Activated CD8-positive, alpha-beta T cell treated with anti-CD3 and anti-CD28 coated beads, Interleukin-2, amount 10 ng/mL, durations not matched to agents 7 days and 5 days (primary cell): ENCODE measurements at regions of chr19 and their contacts with region 1.

Region 1: GRCh38 chr19:19488875-19489690 is 26.3 kb downstream of the TSSK6 start:
- DNase-seq: peak; percentile 98
- ATAC-seq: peak; percentile 91
- H3K4me3 Mint-ChIP-seq: peak overlapping the region; percentile 68
- H3K27ac Mint-ChIP-seq: peak overlapping the region; percentile 97
- H3K4me1 Mint-ChIP-seq: peaks cover 62% of the 10 kb centered on the region
- H3K27me3 Mint-ChIP-seq: no peaks in the 10 kb centered on the region

Region 2: GRCh38 chr19:19320362-19321142 is 168.5 kb before region 1 on chr19 and contains the starts of genes MAU2 and SUGP1:
- CTCF ChIA-PET with region 1: interaction called, 12 read pairs
- POLR2A ChIA-PET with region 1: interaction called, 3 read pairs
- DNase-seq: peak; percentile 95
- ATAC-seq: peak; percentile 94
- H3K4me3 Mint-ChIP-seq: peak within 1 kb of the TSS; percentile 97
- H3K27ac Mint-ChIP-seq: peak within 1 kb of the TSS; percentile 100
- H3K4me1 Mint-ChIP-seq: peaks cover 37% of the 10 kb centered on the region
- H3K27me3 Mint-ChIP-seq: no peaks in the 10 kb centered on the region
- total RNA-seq, gene MAU2: 67.0 to 67.4 TPM
- total RNA-seq, gene SUGP1: 58.9 to 60.9 TPM

Region 3: GRCh38 chr19:19372656-19373416 is 116.2 kb before region 1 on chr19:
- CTCF ChIA-PET with region 1: interaction called, 162 read pairs
- POLR2A ChIA-PET with region 1: interaction called, 3 read pairs
- DNase-seq: peak; percentile 66
- ATAC-seq: peak; percentile 94
- H3K4me3 Mint-ChIP-seq: peak overlapping the region; percentile 59
- H3K27ac Mint-ChIP-seq: peak overlapping the region; percentile 94
- H3K4me1 Mint-ChIP-seq: peaks cover 15% of the 10 kb centered on the region
- H3K27me3 Mint-ChIP-seq: no peaks in the 10 kb centered on the region

Region 4: DNA sequence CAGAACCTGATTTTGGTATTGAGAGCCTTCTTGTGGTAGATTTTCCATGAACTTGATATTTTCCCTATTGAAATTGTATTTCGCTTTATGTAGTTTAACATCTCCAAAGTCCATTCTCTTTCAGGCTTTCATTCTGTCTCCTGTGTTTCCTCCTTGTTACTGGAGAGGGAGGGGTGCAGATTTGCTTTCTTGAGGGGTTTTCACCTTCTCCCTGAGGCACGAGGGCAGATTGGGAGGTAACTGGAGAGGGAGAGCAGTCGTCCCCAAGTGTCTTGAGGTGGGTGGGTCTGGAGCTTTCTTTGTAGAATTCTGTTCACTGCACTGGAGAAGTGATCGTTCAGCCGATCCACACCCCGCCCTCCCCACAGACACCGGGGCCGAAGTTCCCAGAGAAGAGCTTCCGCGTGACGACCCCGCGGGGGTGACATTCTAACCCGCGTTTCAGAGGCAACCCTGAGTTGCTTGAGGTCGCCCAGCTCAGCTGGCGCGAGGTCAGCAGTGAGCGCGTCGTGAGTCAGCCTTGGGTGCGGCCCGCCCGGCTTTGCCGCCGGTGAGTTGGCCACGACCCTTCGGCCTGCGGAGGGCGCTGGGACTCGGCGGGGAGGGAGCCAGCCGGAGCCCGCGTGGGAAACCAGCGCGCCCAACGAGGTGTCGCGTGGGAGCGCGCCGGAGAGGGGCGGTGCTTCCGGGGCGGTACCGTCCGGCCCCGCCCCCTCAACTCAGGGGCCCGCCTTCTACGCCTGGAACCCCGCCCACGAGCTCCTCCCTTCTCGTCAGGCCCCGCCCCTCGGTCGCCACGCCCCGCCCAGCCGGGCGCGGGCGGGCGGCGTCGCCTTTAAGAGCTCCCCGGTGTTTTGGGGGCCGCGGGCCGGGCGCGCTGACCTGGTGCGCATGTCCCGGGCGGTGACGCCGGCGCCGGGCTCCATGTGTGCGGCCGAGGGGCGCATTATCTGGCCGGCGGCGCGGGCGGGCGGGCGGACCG is 83.9 kb before region 1 on chr19 and contains the start of gene GATAD2A:
- CTCF ChIA-PET with region 1: interaction called, 40 read pairs
- POLR2A ChIA-PET with region 1: interaction called, 4 read pairs
- DNase-seq: peak; percentile 92
- ATAC-seq: peak; percentile 80
- H3K4me3 Mint-ChIP-seq: peak within 1 kb of the TSS; percentile 98
- H3K27ac Mint-ChIP-seq: peak within 1 kb of the TSS; percentile 93
- H3K4me1 Mint-ChIP-seq: peaks cover 61% of the 10 kb centered on the region
- H3K27me3 Mint-ChIP-seq: no peaks in the 10 kb centered on the region
- total RNA-seq, gene GATAD2A: 180 TPM

Region 5: GRCh38 chr19:19451429-19452242 is 37.4 kb before region 1 on chr19:
- CTCF ChIA-PET with region 1: interaction called, 18 read pairs
- POLR2A ChIA-PET with region 1: interaction called, 4 read pairs
- DNase-seq: peak; percentile 60
- ATAC-seq: peak; percentile 72
- H3K4me3 Mint-ChIP-seq: peak overlapping the region; percentile 1
- H3K27ac Mint-ChIP-seq: peak overlapping the region; percentile 74
- H3K4me1 Mint-ChIP-seq: peaks cover 78% of the 10 kb centered on the region
- H3K27me3 Mint-ChIP-seq: no peaks in the 10 kb centered on the region

Region 6: GRCh38 chr19:19475849-19476828 is 12.9 kb before region 1 on chr19:
- CTCF ChIA-PET with region 1: interaction called, 13 read pairs
- POLR2A ChIA-PET with region 1: no interaction called
- DNase-seq: no peak
- ATAC-seq: no peak
- H3K4me3 Mint-ChIP-seq: no peak overlapping the region
- H3K27ac Mint-ChIP-seq: peak overlapping the region; percentile 75
- H3K4me1 Mint-ChIP-seq: peaks cover 81% of the 10 kb centered on the region
- H3K27me3 Mint-ChIP-seq: no peaks in the 10 kb centered on the region

Region 7: DNA sequence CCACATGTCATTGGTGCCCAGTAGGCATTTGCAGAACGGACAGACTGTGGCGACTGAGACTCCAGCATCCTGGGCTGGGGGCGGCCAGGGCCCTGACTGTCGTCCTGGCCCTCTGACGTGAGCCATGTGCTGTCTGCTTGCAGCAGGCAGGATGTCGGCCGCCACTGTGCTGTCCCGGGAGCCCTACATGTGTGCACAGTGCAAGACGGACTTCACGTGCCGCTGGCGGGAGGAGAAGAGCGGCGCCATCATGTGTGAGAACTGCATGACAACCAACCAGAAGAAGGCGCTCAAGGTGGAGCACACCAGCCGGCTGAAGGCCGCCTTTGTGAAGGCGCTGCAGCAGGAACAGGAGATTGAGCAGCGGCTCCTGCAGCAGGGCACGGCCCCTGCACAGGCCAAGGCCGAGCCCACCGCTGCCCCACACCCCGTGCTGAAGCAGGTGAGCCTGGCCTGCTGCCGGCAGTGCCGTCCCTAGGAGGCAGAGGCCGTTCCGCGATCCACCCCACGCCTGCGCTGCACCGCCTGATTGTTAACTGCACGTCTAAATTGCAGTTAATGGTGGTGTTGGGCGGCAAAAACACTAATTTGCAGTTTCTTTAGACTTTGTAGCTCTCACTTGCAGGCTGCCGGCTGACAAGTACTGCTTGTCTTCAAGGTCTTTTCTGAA is 12.0 kb after region 1 on chr19:
- CTCF ChIA-PET with region 1: no interaction called
- POLR2A ChIA-PET with region 1: no interaction called
- DNase-seq: no peak
- ATAC-seq: no peak
- H3K4me3 Mint-ChIP-seq: no peak overlapping the region
- H3K27ac Mint-ChIP-seq: no peak overlapping the region
- H3K4me1 Mint-ChIP-seq: peaks cover 7% of the 10 kb centered on the region
- H3K27me3 Mint-ChIP-seq: no peaks in the 10 kb centered on the region

Region 8: GRCh38 chr19:19591133-19591825 is 102.2 kb after region 1 on chr19:
- CTCF ChIA-PET with region 1: no interaction called
- POLR2A ChIA-PET with region 1: no interaction called
- DNase-seq: peak; percentile 67
- ATAC-seq: peak; percentile 62
- H3K4me3 Mint-ChIP-seq: peak overlapping the region; percentile 52
- H3K27ac Mint-ChIP-seq: peak overlapping the region; percentile 79
- H3K4me1 Mint-ChIP-seq: peaks cover 74% of the 10 kb centered on the region
- H3K27me3 Mint-ChIP-seq: no peaks in the 10 kb centered on the region

Region 9: DNA sequence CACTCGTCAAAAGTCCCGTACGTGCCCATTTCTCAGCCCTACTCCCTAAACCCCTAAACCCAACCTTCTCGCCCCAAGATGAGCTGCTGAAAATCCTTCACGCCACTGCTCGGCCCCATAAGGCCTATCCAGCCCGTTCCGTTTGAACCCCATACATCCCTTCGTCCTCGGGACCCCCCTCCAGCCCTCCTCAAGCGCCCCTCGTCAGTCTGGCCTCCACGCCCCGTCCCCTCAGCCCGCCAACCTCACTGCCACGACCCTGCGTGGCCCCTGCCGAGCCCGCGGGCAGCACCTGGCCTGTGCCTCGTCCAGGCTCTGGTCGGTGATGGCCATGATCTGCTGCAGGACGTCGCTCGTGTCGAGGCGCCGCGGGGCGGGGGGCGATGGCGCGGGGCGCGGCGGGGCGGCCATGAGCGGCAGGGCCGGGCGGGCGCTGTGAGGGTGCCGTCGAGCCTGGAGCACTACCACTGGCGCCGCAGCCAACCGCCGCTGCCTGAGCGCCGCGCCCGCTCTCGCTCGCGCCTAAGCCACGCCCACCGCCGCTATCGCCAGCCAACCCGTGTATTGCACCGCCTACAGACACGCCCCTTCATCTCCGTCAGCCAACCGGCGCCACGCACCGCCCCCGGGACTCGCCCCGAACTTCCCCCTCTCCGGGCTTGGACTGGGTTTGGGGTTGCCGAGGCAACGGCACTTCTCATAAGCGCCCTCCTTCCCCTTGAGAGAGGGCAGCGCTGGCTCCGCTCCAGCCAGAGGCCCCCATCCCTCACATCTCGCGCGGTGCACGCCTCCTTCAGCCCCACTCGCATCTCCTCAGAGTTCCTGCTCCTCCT is 129.4 kb after region 1 on chr19 and contains the start of gene PBX4:
- CTCF ChIA-PET with region 1: no interaction called
- POLR2A ChIA-PET with region 1: no interaction called
- DNase-seq: peak; percentile 99
- ATAC-seq: peak; percentile 95
- H3K4me3 Mint-ChIP-seq: peak within 1 kb of the TSS; percentile 90
- H3K27ac Mint-ChIP-seq: peak within 1 kb of the TSS; percentile 79
- H3K4me1 Mint-ChIP-seq: peaks cover 45% of the 10 kb centered on the region
- H3K27me3 Mint-ChIP-seq: no peaks in the 10 kb centered on the region
- total RNA-seq, gene PBX4: 33.8 to 34.1 TPM